PC-3 (cell line): ENCODE measurements at regions of chr15 and their contacts with region 1.

Region 1: DNA sequence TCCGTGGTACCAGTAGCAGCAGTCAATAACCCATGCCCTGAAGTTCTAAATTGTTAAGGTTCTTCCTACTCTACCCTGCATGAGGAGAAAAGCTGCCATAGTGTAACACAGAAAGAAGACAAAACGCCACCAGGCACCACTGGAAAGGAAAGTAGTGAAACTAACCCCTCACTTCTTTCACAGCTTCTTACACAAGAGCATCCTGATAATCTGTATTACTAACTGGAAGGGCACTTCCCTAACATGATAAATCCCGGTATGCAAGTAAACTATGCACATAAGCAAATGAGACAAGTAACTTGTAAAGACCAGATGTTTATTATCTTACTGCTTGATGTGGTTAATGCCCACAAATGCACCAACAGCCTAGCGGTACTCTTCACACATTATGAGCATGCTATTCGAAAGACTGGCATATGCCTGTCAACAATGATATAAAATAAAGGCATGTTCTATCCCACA is 141.3 kb downstream of the ADAM10 start:
- DNase-seq: no peak
- ATAC-seq: no peak
- H3K4me3 ChIP-seq: no peak overlapping the region
- H3K27ac ChIP-seq: no peak overlapping the region
- H3K4me1 ChIP-seq: peaks cover 29% of the 10 kb centered on the region
- H3K27me3 ChIP-seq: no peaks in the 10 kb centered on the region
- CTCF ChIP-seq: no peak

Region 2: GRCh38 chr15:58369261-58369701 is 238.9 kb before region 1 on chr15:
- CTCF ChIA-PET with region 1: no interaction called
- POLR2A ChIA-PET with region 1: no interaction called
- intact Hi-C with region 1: loop called (anchors 10 kb)
- DNase-seq: peak; percentile 63
- ATAC-seq: peak; percentile 94
- H3K4me3 ChIP-seq: peak overlapping the region; percentile 42; the same call in 1 of the 2 replicates
- H3K27ac ChIP-seq: peak overlapping the region; percentile 55
- H3K4me1 ChIP-seq: peaks cover 35% of the 10 kb centered on the region
- H3K27me3 ChIP-seq: no peaks in the 10 kb centered on the region
- CTCF ChIP-seq: no peak

Region 3: GRCh38 chr15:58590926-58591325 is 17.2 kb before region 1 on chr15:
- CTCF ChIA-PET with region 1: no interaction called
- POLR2A ChIA-PET with region 1: no interaction called
- intact Hi-C with region 1: no loop called
- DNase-seq: no peak
- ATAC-seq: no peak
- H3K4me3 ChIP-seq: no peak overlapping the region
- H3K27ac ChIP-seq: no peak overlapping the region
- H3K4me1 ChIP-seq: no peaks in the 10 kb centered on the region
- H3K27me3 ChIP-seq: no peaks in the 10 kb centered on the region
- CTCF ChIP-seq: no peak

Region 4: DNA sequence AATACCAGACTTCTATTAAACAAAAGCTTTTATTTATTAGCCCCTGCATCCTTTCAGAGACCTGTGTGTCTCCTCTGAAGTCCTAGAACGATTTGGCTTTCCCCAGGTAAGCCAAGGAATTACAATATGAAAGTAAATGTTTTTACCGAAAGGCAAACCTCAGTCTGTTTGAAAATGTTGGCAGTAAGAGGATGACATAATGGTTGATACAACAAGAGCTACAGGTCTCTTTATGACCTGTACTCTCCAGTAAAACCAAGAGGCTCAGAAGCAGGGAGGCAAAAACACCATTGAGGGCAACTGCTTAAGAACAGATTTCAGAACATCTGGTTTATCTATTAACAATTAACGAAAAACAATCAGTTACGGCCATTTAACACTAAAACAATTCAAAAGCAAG is 33.5 kb after region 1 on chr15:
- CTCF ChIA-PET with region 1: no interaction called
- POLR2A ChIA-PET with region 1: no interaction called
- intact Hi-C with region 1: no loop called
- DNase-seq: no peak
- ATAC-seq: no peak
- H3K4me3 ChIP-seq: no peak overlapping the region
- H3K27ac ChIP-seq: no peak overlapping the region
- H3K4me1 ChIP-seq: no peaks in the 10 kb centered on the region
- H3K27me3 ChIP-seq: no peaks in the 10 kb centered on the region
- CTCF ChIP-seq: no peak